ENCODE measurements at regions of chr6 and their contacts with region 1.

Region 1: GRCh38 chr6:30616811-30617564 is at the start of gene PPP1R10:
- DNase-seq: peak; percentile 99
- H3K4me3 Mint-ChIP-seq: peak within 1 kb of the TSS; percentile 97
- H3K27ac Mint-ChIP-seq: peak within 1 kb of the TSS; percentile 98
- H3K4me1 Mint-ChIP-seq: peaks cover 45% of the 10 kb centered on the region
- H3K27me3 Mint-ChIP-seq: peaks cover 5% of the 10 kb centered on the region
- total RNA-seq, gene PPP1R10: 64.5 to 67.4 TPM

Region 2: DNA sequence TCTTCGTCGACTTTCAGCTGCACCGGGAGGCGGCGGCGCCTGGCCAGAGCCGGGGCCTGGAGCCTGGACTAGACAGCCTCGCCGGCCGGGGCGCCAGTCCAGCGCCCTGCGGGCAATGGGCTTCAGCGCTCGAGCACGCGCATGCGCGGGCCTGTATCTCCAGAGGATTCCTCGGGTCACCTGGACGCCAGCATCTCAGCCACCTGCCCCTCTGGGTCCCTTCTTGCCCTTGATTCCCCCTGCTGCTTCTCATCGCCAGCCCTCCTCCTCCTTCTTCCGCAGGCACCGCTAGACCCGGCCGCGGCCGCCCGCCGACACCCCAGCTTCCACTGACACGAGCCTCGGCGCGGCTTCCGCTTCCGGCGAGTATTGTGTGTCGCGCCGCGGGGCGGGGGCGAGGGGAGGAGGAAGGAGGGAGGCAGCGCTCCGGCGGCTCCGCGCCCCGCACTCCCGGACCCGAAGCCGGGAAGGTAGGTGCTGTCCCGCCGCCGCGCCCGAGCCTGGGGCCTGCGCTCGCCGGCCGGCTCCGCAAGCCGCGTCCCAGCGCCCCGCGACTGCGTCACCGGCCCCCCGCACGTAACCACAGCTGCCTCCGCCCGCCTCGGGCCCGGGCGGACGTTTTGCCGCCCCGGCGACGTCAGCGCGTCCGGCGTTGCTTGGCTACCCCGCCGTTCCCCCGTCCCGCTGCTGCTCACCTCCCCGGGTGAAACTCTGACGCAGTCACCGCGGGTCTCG is 290.3 kb before region 1 on chr6 and contains the start of gene TRIM39:
- CTCF ChIA-PET with region 1: no interaction called
- POLR2A ChIA-PET with region 1: interaction called, 4 read pairs
- intact Hi-C with region 1: loop called (anchors 2 kb)
- DNase-seq: peak; percentile 90
- H3K4me3 Mint-ChIP-seq: peak within 1 kb of the TSS; percentile 93
- H3K27ac Mint-ChIP-seq: peak within 1 kb of the TSS; percentile 94
- H3K4me1 Mint-ChIP-seq: peaks cover 51% of the 10 kb centered on the region
- H3K27me3 Mint-ChIP-seq: no peaks in the 10 kb centered on the region
- total RNA-seq, gene TRIM39: 13.7 to 15.6 TPM

Region 3: DNA sequence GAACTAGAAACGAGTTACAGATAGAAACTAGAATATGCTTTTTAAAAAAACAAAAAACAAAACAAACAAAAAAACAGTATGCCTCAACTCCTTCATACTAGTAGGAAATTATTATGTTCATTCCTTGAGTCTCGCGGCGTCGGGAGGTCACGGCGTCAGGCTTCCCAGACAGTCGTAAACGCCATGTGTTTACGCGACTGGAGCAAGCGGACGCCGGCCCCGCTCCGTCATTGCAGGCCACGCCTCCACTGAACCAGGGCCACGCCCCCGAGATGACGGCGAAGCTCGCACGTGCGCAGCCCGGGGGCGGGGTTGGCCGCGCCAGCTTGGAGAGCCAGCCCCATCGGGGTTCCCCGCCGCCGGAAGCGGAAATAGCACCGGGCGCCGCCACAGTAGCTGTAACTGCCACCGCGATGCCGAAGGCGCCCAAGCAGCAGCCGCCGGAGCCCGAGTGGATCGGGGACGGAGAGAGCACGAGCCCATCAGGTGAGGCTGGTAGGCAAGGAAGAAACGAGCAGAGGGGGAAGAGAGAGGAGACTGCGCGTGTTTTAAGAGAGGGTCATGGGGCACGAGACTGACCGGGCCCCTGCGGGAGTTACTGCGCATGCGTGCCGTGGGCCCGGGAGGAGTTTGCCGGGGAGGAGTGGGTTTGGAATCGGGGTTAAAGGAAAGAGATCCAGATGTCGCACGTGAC is 45.8 kb before region 1 on chr6 and contains the start of gene ABCF1:
- CTCF ChIA-PET with region 1: interaction called, 15 read pairs
- POLR2A ChIA-PET with region 1: interaction called, 8 read pairs
- intact Hi-C with region 1: loop called (anchors 1 kb)
- DNase-seq: peak; percentile 99
- H3K4me3 Mint-ChIP-seq: peak within 1 kb of the TSS; percentile 94
- H3K27ac Mint-ChIP-seq: peak within 1 kb of the TSS; percentile 94
- H3K4me1 Mint-ChIP-seq: peaks cover 60% of the 10 kb centered on the region
- H3K27me3 Mint-ChIP-seq: no peaks in the 10 kb centered on the region
- total RNA-seq, gene ABCF1: 87.0 to 87.1 TPM

Region 4: GRCh38 chr6:30672445-30673253 is 55.7 kb after region 1 on chr6 and contains the start of gene DHX16:
- CTCF ChIA-PET with region 1: interaction called, 6 read pairs
- POLR2A ChIA-PET with region 1: interaction called, 4 read pairs
- intact Hi-C with region 1: loop called (anchors 2 kb)
- DNase-seq: peak; percentile 93
- H3K4me3 Mint-ChIP-seq: peak within 1 kb of the TSS; percentile 91
- H3K27ac Mint-ChIP-seq: peak within 1 kb of the TSS; percentile 84
- H3K4me1 Mint-ChIP-seq: peaks cover 30% of the 10 kb centered on the region
- H3K27me3 Mint-ChIP-seq: no peaks in the 10 kb centered on the region
- total RNA-seq, gene DHX16: 33.1 to 35.3 TPM

Region 5: DNA sequence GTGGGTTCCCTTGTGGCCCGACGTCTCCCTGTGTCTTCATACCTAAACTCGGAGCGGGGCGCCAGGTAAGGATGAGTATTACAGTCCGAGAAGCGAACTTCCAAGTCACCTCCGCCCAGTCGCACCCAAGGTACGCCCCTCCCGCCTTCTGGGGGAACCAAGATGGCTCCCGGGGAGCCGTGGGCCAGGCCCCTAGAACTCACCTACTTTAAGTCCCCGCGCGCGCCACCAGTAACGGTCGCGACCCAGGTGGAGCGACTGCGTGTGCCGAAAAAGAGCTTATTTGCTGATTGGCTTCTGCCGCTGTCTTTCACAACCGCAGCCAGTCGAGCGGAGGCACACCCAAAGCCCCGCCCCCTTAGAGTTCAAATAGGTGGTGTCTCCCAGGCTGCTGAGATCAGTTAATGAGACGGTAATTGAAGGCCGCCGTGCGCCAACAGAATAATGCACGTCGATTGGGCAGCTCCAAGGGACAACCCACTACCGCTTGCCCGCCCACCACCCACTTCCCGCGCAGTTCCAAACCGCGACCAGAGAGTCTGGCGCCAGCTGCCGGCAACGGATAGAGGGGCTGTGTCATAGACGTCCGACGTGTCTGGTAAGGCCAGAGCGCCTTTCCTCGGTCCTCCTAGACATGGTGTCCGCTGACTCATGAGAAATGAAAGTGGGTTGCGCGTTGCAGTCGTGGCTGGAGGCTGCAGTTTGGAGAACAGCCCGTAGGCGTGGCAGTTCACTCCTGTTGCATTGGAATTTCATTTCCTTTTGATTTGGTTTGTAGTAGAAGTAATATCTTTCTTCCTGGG is 100.3 kb after region 1 on chr6 and contains the start of gene MDC1:
- CTCF ChIA-PET with region 1: interaction called, 34 read pairs
- POLR2A ChIA-PET with region 1: interaction called, 41 read pairs
- intact Hi-C with region 1: loop called (anchors 1 kb)
- DNase-seq: peak; percentile 100
- H3K4me3 Mint-ChIP-seq: peak within 1 kb of the TSS; percentile 92
- H3K27ac Mint-ChIP-seq: peak within 1 kb of the TSS; percentile 99
- H3K4me1 Mint-ChIP-seq: peaks cover 41% of the 10 kb centered on the region
- H3K27me3 Mint-ChIP-seq: no peaks in the 10 kb centered on the region
- total RNA-seq, gene MDC1: 79.5 to 88.7 TPM

Region 6: GRCh38 chr6:31271641-31272357 is 654.8 kb after region 1 on chr6 and contains the start of gene HLA-C:
- CTCF ChIA-PET with region 1: no interaction called
- POLR2A ChIA-PET with region 1: no interaction called
- intact Hi-C with region 1: loop called (anchors 5 kb)
- DNase-seq: peak; percentile 95
- H3K4me3 Mint-ChIP-seq: peak within 1 kb of the TSS; percentile 95
- H3K27ac Mint-ChIP-seq: peak within 1 kb of the TSS; percentile 99
- H3K4me1 Mint-ChIP-seq: peaks cover 51% of the 10 kb centered on the region
- H3K27me3 Mint-ChIP-seq: no peaks in the 10 kb centered on the region
- total RNA-seq, gene HLA-C: 976 to 983 TPM

Measured in activated CD4-positive, alpha-beta memory T cell treated with anti-CD3 and anti-CD28 coated beads for 36 hours (primary cell).